ENCODE measurements at regions of chr9 and their contacts with region 1.

Region 1: GRCh38 chr9:108565651-108566378 is 290.0 kb downstream of the ACTL7B start:
- DNase-seq: peak; percentile 89
- H3K4me3 ChIP-seq: no peak overlapping the region
- H3K27ac ChIP-seq: no peak overlapping the region
- H3K4me1 ChIP-seq: peaks cover 10% of the 10 kb centered on the region; the same call in 1 of the 2 replicates
- H3K27me3 ChIP-seq: no peaks in the 10 kb centered on the region

Region 2: DNA sequence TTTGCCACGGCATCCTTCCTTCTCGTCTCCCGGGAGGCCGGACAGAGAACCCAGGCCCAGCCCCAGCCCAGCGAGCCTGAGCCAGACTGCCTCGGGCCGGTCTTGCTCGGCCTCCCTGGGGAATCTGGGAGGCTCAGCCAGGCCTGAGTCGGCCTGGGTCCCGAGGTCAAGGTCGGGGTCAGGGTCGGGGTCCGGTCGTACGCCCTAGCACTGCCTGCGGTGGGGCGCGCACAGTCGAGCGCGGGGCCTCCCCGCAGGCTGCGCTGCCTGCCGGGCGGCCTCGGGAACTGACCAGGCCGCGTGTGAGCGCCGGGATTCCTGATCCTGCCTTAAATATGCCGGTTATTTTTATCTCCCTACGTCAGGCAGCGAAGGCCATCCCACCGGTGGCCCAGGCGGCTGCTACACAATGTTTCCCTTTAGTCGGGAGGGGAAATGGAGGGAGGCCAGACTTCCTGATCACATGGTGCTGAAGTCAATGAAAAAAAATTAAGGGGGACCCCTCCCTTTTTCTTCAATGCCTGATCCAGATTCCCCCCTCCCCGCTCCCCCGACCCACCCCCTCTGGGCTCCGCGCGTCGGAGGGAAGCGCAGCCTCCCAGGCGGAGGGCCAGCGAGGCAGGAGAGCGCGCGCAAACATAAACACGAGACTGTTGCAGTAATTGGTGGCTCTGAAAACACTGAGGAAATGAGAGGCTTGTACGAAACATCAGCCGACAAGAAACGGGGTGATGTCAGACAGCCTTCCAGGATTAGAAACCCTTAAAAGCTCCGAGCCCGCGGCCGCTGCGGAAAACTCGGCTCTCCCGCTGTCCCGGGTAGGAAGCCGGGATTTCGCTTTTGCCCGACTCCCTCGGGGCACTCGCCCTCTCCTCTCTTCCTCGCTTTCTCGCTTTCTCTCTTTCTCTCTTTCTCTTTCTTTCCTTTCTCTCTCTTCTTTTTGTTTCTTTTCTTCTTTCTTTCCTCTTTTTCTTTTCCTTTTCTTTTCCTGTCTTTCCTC is 928.1 kb before region 1 on chr9:
- in situ Hi-C with region 1: loop called (anchors 25 kb)
- DNase-seq: peak; percentile 98
- H3K4me3 ChIP-seq: peak overlapping the region; percentile 89
- H3K27ac ChIP-seq: peak overlapping the region; percentile 99
- H3K4me1 ChIP-seq: peaks cover 38% of the 10 kb centered on the region
- H3K27me3 ChIP-seq: no peaks in the 10 kb centered on the region

Region 3: GRCh38 chr9:108282872-108283271 is 282.9 kb before region 1 on chr9:
- in situ Hi-C with region 1: loop called (anchors 10 kb)
- DNase-seq: peak; percentile 24
- H3K4me3 ChIP-seq: no peak overlapping the region
- H3K27ac ChIP-seq: no peak overlapping the region
- H3K4me1 ChIP-seq: no peaks in the 10 kb centered on the region
- H3K27me3 ChIP-seq: no peaks in the 10 kb centered on the region